ENCODE measurements at regions of chr3 and their contacts with region 1.

Region 1: DNA sequence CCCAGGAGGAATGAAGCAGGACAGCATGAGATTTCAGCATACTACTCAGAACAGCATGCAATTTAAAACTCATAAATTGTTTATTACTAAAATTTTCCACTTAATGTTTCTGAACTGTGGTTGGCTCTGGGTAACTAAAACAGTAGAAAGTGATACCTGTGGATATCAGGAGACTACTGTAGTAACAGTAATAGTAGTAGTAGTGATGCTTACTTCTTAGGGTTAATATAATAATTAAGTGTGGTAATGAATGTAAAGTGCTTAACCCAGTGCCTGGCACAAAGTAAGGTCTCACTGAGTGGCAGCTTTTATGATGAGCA is 117.3 kb downstream of the NR1I2 start:
- DNase-seq: no peak
- ATAC-seq: no peak

Region 2: GRCh38 chr3:119955972-119956371 is 56.8 kb after region 1 on chr3:
- intact Hi-C with region 1: loop called (anchors 2 kb)
- DNase-seq: no peak
- ATAC-seq: peak; percentile 76

Region 3: GRCh38 chr3:120095226-120095978 is 196.2 kb after region 1 on chr3:
- intact Hi-C with region 1: loop called (anchors 10 kb)
- DNase-seq: peak; percentile 94
- ATAC-seq: peak; percentile 64

Measured in left ventricle myocardium superior (tissue), 1 donor.